ENCODE measurements at regions of chr1 and their contacts with region 1.

Region 1: DNA sequence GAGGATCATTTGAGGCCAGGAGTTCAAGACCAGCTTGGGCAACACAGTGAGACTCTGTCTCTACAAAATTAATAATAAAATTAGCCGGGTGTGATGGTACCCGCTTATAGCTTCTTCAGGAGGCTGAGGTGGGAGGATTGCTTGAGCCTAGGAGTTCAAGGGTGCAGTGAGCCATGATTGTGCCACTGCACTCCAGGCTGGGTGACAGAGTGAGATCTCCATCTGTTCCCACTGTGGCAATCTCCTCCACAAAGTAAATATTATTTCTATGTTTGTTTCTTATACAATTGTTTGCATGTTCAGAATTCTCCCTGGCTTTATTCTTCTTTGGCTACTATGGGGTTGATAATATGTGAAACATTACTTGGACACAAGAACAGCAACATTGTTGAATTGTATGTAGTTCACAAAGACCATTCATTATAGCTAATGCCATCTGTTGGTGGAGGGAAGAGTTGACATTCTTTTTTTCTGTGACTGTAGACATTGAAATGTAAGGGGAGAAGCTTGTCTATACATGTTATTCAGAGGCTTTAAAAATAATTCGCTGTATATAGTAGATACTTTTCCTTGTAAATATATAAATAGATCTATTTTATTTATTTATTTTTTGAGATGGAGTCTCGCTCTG is 47.8 kb upstream of the SRSF10 start:
- DNase-seq: peak; percentile 70
- H3K4me3 ChIP-seq: no peak overlapping the region
- H3K27ac ChIP-seq: no peak overlapping the region
- H3K4me1 ChIP-seq: no peaks in the 10 kb centered on the region
- H3K27me3 ChIP-seq: no peaks in the 10 kb centered on the region
- CTCF ChIP-seq: peak; percentile 37 to 45
- POLR2A ChIP-seq: no peak

Region 2: DNA sequence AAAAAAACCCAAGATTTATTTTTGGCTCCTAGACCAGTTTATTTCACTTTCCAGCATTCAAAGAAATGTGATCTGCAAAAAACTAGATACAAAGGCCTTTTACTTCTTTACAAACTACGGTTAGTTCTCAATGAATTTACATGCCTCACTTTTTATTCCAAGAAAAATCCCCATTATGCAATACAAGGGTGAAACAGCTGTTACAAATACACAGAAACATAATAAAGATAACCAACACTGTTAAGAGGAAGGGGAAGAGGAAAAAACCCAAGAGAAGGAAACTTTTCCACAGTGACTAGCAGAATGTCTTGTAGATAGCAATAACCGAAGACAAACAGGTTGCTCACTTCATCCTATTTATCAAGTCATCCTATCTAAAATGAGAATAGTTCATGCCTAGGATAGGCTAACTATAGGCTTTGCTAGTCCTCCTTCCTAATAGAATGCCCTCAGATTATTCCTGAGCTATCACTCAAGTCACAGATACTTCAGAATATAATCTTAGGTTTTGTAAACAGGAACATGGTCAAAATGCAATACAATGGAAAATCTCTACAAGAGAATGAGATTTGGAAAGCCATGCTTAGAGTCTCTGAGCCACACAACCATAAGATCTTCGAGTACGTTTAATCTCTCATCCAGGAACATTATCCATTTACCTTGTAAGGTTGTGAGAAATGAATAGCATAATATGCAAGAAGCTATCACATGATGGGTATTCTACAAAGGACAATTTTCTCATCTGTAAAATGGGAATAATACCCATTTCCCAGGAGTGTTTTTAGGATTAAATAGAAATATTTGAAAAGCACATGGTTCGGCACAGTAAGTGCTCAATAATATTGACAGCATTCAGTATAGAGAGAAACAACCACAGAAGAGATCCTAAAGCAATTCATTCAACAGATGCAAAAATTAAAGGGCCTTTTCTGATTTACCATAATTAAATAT is 62.9 kb before region 1 on chr1:
- CTCF ChIA-PET with region 1: interaction called, 42 read pairs
- POLR2A ChIA-PET with region 1: no interaction called
- dilution Hi-C with region 1: no loop called
- intact Hi-C with region 1: no loop called
- DNase-seq: peak; percentile 60
- H3K4me3 ChIP-seq: no peak overlapping the region
- H3K27ac ChIP-seq: no peak overlapping the region
- H3K4me1 ChIP-seq: peaks cover 13% of the 10 kb centered on the region
- H3K27me3 ChIP-seq: no peaks in the 10 kb centered on the region
- CTCF ChIP-seq: no peak
- POLR2A ChIP-seq: no peak

Region 3: DNA sequence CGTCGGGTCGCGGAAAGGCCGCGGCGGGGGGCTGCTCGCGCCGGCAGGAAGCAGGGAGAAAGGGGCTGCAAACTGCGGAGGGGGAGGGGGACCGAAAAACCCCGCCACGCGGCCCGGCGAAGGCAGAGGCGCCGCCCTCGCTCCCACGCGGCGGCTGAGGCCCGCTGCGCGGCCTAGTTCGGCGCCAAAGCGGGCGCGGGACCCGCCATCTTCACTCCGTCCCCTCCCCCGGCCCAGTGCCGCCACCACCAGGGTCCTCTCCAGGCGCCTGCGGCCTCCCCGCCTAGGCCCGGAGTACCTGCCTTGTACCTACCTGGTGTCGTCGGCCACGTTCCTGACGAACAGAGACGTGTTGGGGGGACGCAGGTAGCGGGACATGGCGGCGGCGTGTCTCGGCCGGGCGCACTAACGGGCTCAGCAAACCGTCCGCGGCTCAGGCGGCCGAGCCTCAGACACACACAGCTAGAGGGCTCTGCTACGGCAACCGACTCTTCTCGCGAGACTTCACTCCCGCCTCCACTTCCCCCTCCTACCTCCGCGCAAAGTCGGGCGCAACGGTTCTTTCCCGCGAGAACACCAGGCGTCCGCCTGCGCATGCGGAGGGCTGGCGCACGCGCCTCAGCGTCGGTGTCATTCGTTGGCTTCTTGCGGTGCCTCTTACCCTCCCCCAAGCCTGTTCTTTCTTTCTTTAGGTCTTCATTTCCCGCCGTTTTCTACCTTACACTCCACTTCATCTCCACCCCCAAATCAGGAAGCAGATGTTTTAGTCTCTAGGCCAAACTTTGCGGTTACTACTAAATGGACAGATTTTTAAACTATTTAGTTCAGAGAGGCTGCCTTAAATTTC is 47.9 kb before region 1 on chr1 and contains the start of gene SRSF10:
- CTCF ChIA-PET with region 1: interaction called, 61 read pairs
- POLR2A ChIA-PET with region 1: interaction called, 3 read pairs
- dilution Hi-C with region 1: no loop called
- intact Hi-C with region 1: loop called (anchors 1 kb)
- DNase-seq: peak; percentile 99
- H3K4me3 ChIP-seq: peak within 1 kb of the TSS; percentile 79 to 100 (median 85)
- H3K27ac ChIP-seq: peak within 1 kb of the TSS; percentile 94
- H3K4me1 ChIP-seq: peaks cover 46% of the 10 kb centered on the region
- H3K27me3 ChIP-seq: no peaks in the 10 kb centered on the region
- CTCF ChIP-seq: peak in 1 of 2 donors; percentile 39
- POLR2A ChIP-seq: peak; percentile 98
- total RNA-seq, gene SRSF10: 124 and 125 TPM in 2 replicates

Region 4: DNA sequence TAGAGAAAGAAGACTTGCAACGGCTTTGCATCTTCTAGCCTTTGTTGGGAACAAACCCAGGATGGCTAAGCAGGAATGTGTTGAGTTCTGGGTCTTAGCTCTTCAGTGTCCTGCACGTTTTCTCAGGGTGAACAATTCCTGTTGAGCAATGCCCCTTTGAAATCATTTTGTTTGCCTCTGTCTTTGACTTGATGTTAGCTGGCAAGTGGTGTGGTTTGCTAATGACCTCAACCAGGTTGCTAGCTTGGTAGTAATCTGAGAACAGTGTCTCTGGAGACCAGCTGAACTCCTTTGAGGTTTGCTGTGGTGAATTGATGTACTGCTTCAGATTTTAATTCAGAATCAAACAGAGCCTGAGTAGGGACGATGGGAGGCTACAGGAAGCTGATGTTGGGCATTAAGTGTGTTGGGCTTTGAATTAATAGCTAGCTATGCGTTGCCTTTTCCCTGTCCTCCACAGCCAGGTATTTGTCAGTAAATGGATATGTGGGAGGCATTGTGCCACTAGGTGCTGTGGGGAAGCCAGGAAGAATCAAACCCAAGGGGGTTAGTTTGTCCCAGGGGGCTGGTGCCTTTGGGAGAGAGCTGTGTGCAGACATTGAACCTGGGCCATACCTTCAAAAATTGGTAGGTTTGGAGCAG is 24.5 kb before region 1 on chr1:
- CTCF ChIA-PET with region 1: interaction called, 33 read pairs
- POLR2A ChIA-PET with region 1: interaction called, 3 read pairs
- dilution Hi-C with region 1: no loop called
- intact Hi-C with region 1: no loop called
- DNase-seq: no peak
- H3K4me3 ChIP-seq: no peak overlapping the region
- H3K27ac ChIP-seq: no peak overlapping the region
- H3K4me1 ChIP-seq: peaks cover 10% of the 10 kb centered on the region
- H3K27me3 ChIP-seq: no peaks in the 10 kb centered on the region
- CTCF ChIP-seq: no peak
- POLR2A ChIP-seq: no peak

Region 5: DNA sequence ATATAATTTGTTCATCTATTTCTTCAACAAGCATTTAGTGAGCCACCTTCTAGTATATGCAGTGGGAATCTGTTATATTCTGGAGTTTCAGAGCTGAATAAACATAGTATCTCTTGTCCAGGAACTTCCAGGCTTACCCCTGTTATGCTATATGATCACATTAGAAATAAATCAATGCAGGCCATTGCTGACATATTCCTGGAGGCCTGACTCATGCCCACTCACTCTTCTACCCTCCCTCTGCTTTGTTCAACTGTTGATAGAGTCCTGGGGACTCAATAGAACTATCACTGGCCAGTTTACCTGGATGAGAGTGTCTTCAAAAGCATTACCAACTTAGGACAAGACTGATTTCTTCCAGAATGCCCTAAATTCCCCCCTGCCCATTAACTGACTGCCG is 18.5 kb before region 1 on chr1:
- CTCF ChIA-PET with region 1: interaction called, 33 read pairs
- POLR2A ChIA-PET with region 1: interaction called, 3 read pairs
- dilution Hi-C with region 1: no loop called
- intact Hi-C with region 1: no loop called
- DNase-seq: peak; percentile 87
- H3K4me3 ChIP-seq: no peak overlapping the region
- H3K27ac ChIP-seq: peak overlapping the region; percentile 56
- H3K4me1 ChIP-seq: peaks cover 26% of the 10 kb centered on the region
- H3K27me3 ChIP-seq: no peaks in the 10 kb centered on the region
- CTCF ChIP-seq: no peak
- POLR2A ChIP-seq: peak; percentile 35

Region 6: DNA sequence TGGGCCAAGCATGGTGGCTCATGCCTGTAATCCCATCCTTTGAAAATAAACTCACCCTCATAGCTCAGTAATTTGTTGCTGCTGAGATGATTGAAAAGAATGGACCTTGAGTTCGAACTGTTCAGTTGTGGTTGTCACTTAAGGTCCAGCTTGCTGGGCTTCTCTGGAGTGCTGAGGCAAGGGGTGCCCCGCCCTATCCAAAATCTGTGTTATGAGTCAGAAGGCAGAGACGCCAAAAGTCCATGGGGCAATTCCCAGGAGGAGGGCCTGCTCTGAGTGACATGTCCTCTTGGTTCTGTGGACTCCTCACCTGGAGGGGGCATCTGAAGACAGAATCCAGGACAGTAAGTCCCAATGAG is 19.1 kb after region 1 on chr1:
- CTCF ChIA-PET with region 1: interaction called, 10 read pairs
- POLR2A ChIA-PET with region 1: no interaction called
- dilution Hi-C with region 1: no loop called
- intact Hi-C with region 1: no loop called
- DNase-seq: no peak
- H3K4me3 ChIP-seq: no peak overlapping the region
- H3K27ac ChIP-seq: no peak overlapping the region
- H3K4me1 ChIP-seq: peaks cover 2% of the 10 kb centered on the region
- H3K27me3 ChIP-seq: peaks cover 0 to 4% of the 10 kb centered on the region in 2 experiments
- CTCF ChIP-seq: no peak
- POLR2A ChIP-seq: no peak